CD4-positive, alpha-beta memory T cell (primary cell): ENCODE measurements at regions of chr5 and their contacts with region 1.

Region 1: DNA sequence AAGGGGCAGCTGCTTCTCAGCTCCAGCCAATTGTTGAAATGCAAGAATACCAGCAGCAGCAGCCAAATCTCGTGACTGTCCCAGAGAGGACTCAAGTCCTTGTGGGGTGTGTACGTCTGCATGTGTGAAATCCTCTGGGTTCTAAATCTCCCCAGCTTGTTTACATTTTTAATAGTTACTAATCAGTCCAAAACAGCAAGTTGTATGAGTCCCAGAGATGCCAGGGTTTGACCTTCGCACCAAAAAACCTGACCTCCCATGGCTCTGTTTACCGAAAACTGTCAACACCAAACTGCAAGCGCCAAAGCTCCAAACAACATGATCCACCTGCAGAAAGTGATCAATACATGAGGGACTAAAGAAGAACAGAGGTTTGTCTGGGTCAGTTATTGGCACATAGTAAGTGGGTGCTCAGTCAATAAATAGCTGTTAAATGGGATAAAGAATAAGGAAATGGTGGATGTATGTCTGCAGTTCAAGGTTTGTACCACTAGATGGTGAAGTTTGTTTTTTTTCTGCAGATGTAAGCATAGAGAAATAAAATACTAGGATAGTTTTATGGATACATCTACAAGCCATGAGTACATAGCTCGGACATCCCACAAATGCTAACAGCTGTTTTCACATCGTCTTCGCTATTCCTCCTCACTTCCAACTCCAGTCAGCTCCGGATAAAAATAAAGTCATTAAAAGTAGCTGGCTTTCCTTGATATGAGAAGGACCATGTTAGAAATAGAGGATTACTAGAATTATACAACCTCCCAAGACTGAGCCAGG is 85.3 kb upstream of the ADRB2 start:
- DNase-seq: peak in 4 of 5 donors; percentile 28 to 35 (median 32)
- H3K4me3 ChIP-seq: no peak overlapping the region
- H3K4me3 Mint-ChIP-seq: no peak overlapping the region
- H3K27ac ChIP-seq: no peak overlapping the region
- H3K27ac Mint-ChIP-seq: no peak overlapping the region
- H3K4me1 ChIP-seq: no peaks in the 10 kb centered on the region
- H3K4me1 Mint-ChIP-seq: no peaks in the 10 kb centered on the region
- H3K27me3 ChIP-seq: no peaks in the 10 kb centered on the region
- H3K27me3 Mint-ChIP-seq: peaks cover 4 to 15% of the 10 kb centered on the region in 2 donors

Region 2: DNA sequence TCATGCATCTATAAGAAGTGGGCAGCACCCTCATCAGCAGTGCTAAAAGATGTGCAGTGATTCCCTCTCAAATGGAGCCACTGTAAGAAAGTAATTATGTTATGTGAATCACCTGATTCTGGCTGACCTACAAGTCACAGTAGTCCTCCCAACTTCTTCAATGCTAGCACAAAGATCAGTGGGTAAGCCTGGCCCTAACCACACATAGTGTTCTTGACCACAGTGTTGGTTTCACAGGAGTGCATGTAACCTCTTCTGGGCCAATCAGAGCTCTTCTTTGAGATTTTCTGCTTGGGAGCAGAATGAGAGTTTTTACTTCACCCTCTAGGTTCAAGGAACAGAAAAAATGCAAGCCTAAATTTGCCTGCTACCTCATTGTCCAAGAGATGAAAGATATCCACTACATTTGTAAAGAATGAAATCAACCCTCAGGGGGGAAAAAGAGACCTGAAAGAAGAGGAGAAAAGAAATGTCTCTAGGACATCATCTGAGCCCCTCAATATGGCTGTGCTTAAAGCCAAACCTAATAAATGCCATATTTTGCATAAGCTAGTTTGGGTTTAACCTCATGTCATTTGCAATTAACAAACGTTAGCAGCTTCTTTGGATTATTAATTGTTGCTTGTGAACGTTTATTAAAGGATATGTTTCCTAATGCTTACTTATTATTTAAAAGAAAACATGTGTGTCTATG is 19.9 kb after region 1 on chr5:
- CTCF ChIA-PET with region 1: interaction called, 11 read pairs
- POLR2A ChIA-PET with region 1: no interaction called
- intact Hi-C with region 1: no loop called
- DNase-seq: no peak
- H3K4me3 ChIP-seq: no peak overlapping the region
- H3K4me3 Mint-ChIP-seq: no peak overlapping the region
- H3K27ac ChIP-seq: no peak overlapping the region
- H3K27ac Mint-ChIP-seq: no peak overlapping the region
- H3K4me1 ChIP-seq: no peaks in the 10 kb centered on the region
- H3K4me1 Mint-ChIP-seq: no peaks in the 10 kb centered on the region
- H3K27me3 ChIP-seq: no peaks in the 10 kb centered on the region
- H3K27me3 Mint-ChIP-seq: peaks cover 4 to 7% of the 10 kb centered on the region in 2 donors

Region 3: GRCh38 chr5:148998174-148998797 is 257.1 kb after region 1 on chr5:
- CTCF ChIA-PET with region 1: interaction called, 122 read pairs
- POLR2A ChIA-PET with region 1: no interaction called
- intact Hi-C with region 1: no loop called
- DNase-seq: peak; percentile 44 to 55 (median 49)
- H3K4me3 ChIP-seq: no peak overlapping the region
- H3K4me3 Mint-ChIP-seq: no peak overlapping the region
- H3K27ac ChIP-seq: no peak overlapping the region
- H3K27ac Mint-ChIP-seq: no peak overlapping the region
- H3K4me1 ChIP-seq: no peaks in the 10 kb centered on the region
- H3K4me1 Mint-ChIP-seq: peaks cover 0 to 2% (median 0%) of the 10 kb centered on the region in 4 donors
- H3K27me3 ChIP-seq: no peaks in the 10 kb centered on the region
- H3K27me3 Mint-ChIP-seq: peaks cover 6% of the 10 kb centered on the region in 2 donors

Region 4: GRCh38 chr5:149011074-149011476 is 269.9 kb after region 1 on chr5:
- CTCF ChIA-PET with region 1: interaction called, 14 read pairs
- POLR2A ChIA-PET with region 1: no interaction called
- intact Hi-C with region 1: no loop called
- DNase-seq: no peak
- H3K4me3 ChIP-seq: no peak overlapping the region
- H3K4me3 Mint-ChIP-seq: no peak overlapping the region
- H3K27ac ChIP-seq: no peak overlapping the region
- H3K27ac Mint-ChIP-seq: no peak overlapping the region
- H3K4me1 ChIP-seq: no peaks in the 10 kb centered on the region
- H3K4me1 Mint-ChIP-seq: no peaks in the 10 kb centered on the region
- H3K27me3 ChIP-seq: no peaks in the 10 kb centered on the region
- H3K27me3 Mint-ChIP-seq: peaks cover 0 to 5% of the 10 kb centered on the region in 2 donors

Region 5: DNA sequence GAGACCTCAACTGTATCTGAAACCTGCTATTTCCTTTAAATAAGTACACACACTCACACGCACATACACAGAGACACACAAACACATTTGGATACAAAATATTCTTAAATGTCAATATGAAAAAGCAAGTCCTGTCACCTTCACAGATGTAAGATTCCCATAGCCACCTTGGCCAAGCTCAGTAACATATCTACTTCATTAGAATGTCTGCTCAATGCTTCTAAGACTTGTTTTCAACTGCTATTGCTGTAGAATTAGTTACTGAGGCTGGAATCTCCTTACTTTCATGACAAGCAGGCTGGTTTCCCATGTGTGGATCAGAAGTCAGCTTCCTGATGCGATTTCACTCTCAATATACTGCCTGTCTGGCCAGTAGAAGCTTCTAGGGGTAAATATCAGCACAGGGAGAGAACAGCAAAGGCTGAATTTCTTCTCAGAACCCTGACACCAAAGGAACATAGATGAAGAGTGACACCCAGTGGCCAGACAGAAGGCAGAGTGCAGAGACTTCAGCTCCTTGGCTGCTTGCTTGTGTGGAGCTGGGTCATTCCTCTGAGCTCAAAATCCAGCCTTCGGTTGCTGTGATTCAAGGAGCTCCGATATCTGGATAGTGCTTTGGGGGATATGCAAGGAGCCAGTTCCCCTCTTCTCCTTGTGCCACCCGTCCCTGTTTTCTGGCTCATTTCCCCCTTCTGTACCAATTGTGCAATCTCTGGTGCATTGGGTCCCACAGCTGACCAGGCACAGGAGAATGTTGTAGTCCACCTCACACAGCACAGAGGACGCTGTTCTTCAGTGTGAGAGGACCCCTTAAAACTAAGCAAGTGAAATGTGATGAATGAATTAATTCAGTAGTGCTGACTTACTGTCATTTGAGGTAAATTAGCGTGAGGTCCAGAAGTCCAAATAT is 373.5 kb after region 1 on chr5:
- CTCF ChIA-PET with region 1: interaction called, 31 read pairs
- POLR2A ChIA-PET with region 1: no interaction called
- intact Hi-C with region 1: no loop called
- DNase-seq: peak; percentile 35 to 56 (median 43)
- H3K4me3 ChIP-seq: no peak overlapping the region
- H3K4me3 Mint-ChIP-seq: no peak overlapping the region
- H3K27ac ChIP-seq: no peak overlapping the region
- H3K27ac Mint-ChIP-seq: no peak overlapping the region
- H3K4me1 ChIP-seq: no peaks in the 10 kb centered on the region
- H3K4me1 Mint-ChIP-seq: no peaks in the 10 kb centered on the region
- H3K27me3 ChIP-seq: no peaks in the 10 kb centered on the region
- H3K27me3 Mint-ChIP-seq: peaks cover 13 to 14% of the 10 kb centered on the region in 2 donors